Activated CD4-positive, alpha-beta T cell treated with anti-CD3 and anti-CD28 coated beads for 36 hours (primary cell): ENCODE measurements at regions of chr21 and their contacts with region 1.

Region 1: GRCh38 chr21:33947451-33948095 is 32.0 kb upstream of the ATP5PO start:
- DNase-seq: peak; percentile 92
- ATAC-seq: peak; percentile 63
- H3K4me3 Mint-ChIP-seq: peak overlapping the region; percentile 70
- H3K27ac Mint-ChIP-seq: peak overlapping the region; percentile 100
- H3K4me1 Mint-ChIP-seq: peaks cover 79% of the 10 kb centered on the region
- H3K27me3 Mint-ChIP-seq: no peaks in the 10 kb centered on the region

Region 2: GRCh38 chr21:33229784-33230544 is 717.6 kb before region 1 on chr21 and contains the start of gene IFNAR2:
- CTCF ChIA-PET with region 1: no interaction called
- POLR2A ChIA-PET with region 1: no interaction called
- intact Hi-C with region 1: loop called in 1 of 2 experiments (anchors 10 kb)
- DNase-seq: peak; percentile 85
- ATAC-seq: peak; percentile 55
- H3K4me3 Mint-ChIP-seq: peak within 1 kb of the TSS; percentile 84
- H3K27ac Mint-ChIP-seq: peak within 1 kb of the TSS; percentile 91
- H3K4me1 Mint-ChIP-seq: peaks cover 54% of the 10 kb centered on the region
- H3K27me3 Mint-ChIP-seq: no peaks in the 10 kb centered on the region
- total RNA-seq, gene IFNAR2: 26.6 to 29.8 TPM

Region 3: GRCh38 chr21:33767236-33767635 is 180.3 kb before region 1 on chr21:
- CTCF ChIA-PET with region 1: no interaction called
- POLR2A ChIA-PET with region 1: no interaction called
- intact Hi-C with region 1: no loop called
- DNase-seq: no peak
- ATAC-seq: no peak
- H3K4me3 Mint-ChIP-seq: no peak overlapping the region
- H3K27ac Mint-ChIP-seq: no peak overlapping the region
- H3K4me1 Mint-ChIP-seq: no peaks in the 10 kb centered on the region
- H3K27me3 Mint-ChIP-seq: no peaks in the 10 kb centered on the region

Region 4: GRCh38 chr21:33931799-33932390 is 15.7 kb before region 1 on chr21:
- CTCF ChIA-PET with region 1: interaction called, 7 read pairs
- POLR2A ChIA-PET with region 1: interaction called, 57 read pairs
- intact Hi-C with region 1: loop called (anchors 1 to 2 kb)
- DNase-seq: peak; percentile 38
- ATAC-seq: peak; percentile 13
- H3K4me3 Mint-ChIP-seq: peak overlapping the region; percentile 92
- H3K27ac Mint-ChIP-seq: peak overlapping the region; percentile 99
- H3K4me1 Mint-ChIP-seq: peaks cover 40% of the 10 kb centered on the region
- H3K27me3 Mint-ChIP-seq: no peaks in the 10 kb centered on the region

Region 5: GRCh38 chr21:34008618-34009017 is 61.0 kb after region 1 on chr21:
- CTCF ChIA-PET with region 1: interaction called, 3 read pairs
- POLR2A ChIA-PET with region 1: interaction called, 31 read pairs
- intact Hi-C with region 1: loop called (anchors 1 to 2 kb)
- DNase-seq: peak; percentile 89
- ATAC-seq: peak; percentile 96
- H3K4me3 Mint-ChIP-seq: no peak overlapping the region
- H3K27ac Mint-ChIP-seq: peak overlapping the region; percentile 44
- H3K4me1 Mint-ChIP-seq: peaks cover 21% of the 10 kb centered on the region
- H3K27me3 Mint-ChIP-seq: no peaks in the 10 kb centered on the region

Region 6: DNA sequence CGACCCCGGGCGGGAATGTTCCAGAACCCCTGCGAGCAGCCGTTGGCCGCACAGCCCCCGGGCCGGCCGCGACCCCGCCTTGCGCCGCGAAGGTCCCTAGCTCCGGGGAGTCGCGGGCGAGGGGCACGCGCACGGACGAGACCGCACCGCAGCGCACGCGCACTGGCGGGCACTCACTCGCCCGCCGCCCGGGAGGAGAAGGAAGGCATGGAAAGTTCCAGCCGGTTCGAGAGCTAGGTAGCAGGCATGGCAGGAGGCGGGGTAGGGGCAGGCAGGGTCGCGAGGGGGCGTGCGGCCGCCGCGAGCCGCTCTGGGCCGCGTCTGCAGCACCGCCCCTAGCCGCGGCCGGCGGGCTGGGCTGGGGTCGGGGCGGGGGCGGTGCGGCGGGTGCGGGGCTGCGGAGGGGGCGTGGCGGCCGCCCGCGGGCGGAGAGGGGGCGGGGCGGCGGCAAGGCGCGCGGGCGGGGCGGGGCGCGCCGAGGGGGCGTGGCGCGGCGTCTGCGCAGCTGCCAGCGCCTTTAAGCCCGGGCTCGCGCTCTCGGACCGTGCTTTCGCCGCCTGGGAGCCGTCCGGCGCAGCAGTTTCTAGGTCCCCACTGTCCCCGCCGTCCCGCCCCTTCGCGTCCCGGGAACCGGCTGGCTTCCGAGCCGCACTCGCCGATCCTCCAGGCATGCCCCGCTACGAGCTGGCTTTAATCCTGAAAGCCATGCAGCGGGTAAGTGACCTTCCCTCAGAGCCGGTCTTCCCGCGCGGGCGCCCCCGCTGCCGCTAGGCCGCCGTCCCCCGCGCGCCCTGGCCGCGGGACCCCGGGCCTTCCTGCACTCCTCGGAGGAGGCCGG is 125.7 kb after region 1 on chr21 and contains the starts of genes MRPS6 and SLC5A3:
- CTCF ChIA-PET with region 1: interaction called, 3 read pairs
- POLR2A ChIA-PET with region 1: interaction called, 14 read pairs
- intact Hi-C with region 1: loop called in 1 of 2 experiments (anchors 1 kb)
- DNase-seq: peak; percentile 81
- ATAC-seq: peak; percentile 66
- H3K4me3 Mint-ChIP-seq: peak within 1 kb of the TSS; percentile 96
- H3K27ac Mint-ChIP-seq: peak within 1 kb of the TSS; percentile 92
- H3K4me1 Mint-ChIP-seq: peaks cover 38% of the 10 kb centered on the region
- H3K27me3 Mint-ChIP-seq: no peaks in the 10 kb centered on the region
- total RNA-seq, gene MRPS6: 102 to 117 TPM
- total RNA-seq, gene SLC5A3: 18.2 to 22.9 TPM